HEK293T (cell line): ENCODE measurements at regions of chr5 and their contacts with region 1.

Region 1: DNA sequence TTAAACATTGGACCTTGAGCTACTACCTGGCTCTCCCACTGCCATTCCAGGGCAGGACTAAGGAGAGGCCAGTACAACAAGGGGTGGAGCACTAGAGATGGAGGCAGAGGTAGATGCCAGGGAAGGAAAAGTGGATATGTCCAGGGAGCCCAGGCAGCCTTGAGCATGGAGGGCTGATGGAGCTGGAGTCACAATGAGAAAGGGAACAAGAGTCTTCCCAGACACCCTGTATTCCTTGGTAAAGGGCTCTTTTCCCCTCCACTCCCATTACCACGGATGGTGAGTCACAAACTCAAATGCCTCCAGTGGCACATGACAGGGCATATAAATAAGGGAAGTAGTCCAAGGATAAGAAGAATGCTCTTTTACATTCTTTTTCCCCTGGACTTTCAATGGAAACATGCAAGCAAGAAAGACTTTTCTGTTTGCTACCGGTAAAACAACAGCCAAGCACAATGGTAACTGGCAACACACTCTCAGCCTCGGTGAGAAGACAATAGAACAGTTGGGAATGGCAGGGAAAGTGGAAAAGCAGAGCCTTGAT is 16.7 kb downstream of the ERAP1 start:
- DNase-seq: no peak

Region 2: GRCh38 chr5:96807075-96807654 is 16.1 kb after region 1 on chr5:
- CTCF ChIA-PET with region 1: no interaction called
- POLR2A ChIA-PET with region 1: interaction called, 16 read pairs
- DNase-seq: peak; percentile 64